ENCODE measurements at regions of chr20 and their contacts with region 1.

Region 1: GRCh38 chr20:2101865-2102584 is 398 bp downstream of the STK35 start:
- DNase-seq: peak; percentile 96
- H3K4me3 Mint-ChIP-seq: peak overlapping the region; percentile 97
- H3K27ac Mint-ChIP-seq: peak overlapping the region; percentile 99
- H3K4me1 Mint-ChIP-seq: peaks cover 39% of the 10 kb centered on the region
- H3K27me3 Mint-ChIP-seq: peaks cover 11% of the 10 kb centered on the region

Region 2: GRCh38 chr20:543369-544152 is 1558.5 kb before region 1 on chr20 and contains the start of gene CSNK2A1:
- intact Hi-C with region 1: loop called (anchors 5 kb)
- DNase-seq: peak; percentile 99
- H3K4me3 Mint-ChIP-seq: peak within 1 kb of the TSS; percentile 88
- H3K27ac Mint-ChIP-seq: peak within 1 kb of the TSS; percentile 97
- H3K4me1 Mint-ChIP-seq: peaks cover 38% of the 10 kb centered on the region
- H3K27me3 Mint-ChIP-seq: peaks cover 9% of the 10 kb centered on the region
- total RNA-seq, gene CSNK2A1: 179 TPM in 2 replicates

Region 3: GRCh38 chr20:833450-834150 is 1268.4 kb before region 1 on chr20 and contains the start of gene FAM110A:
- intact Hi-C with region 1: loop called (anchors 5 kb)
- DNase-seq: peak; percentile 99
- H3K4me3 Mint-ChIP-seq: peak within 1 kb of the TSS; percentile 84
- H3K27ac Mint-ChIP-seq: peak within 1 kb of the TSS; percentile 85
- H3K4me1 Mint-ChIP-seq: peaks cover 43% of the 10 kb centered on the region
- H3K27me3 Mint-ChIP-seq: no peaks in the 10 kb centered on the region
- total RNA-seq, gene FAM110A: 13.3 and 15.4 TPM in 2 replicates

Region 4: DNA sequence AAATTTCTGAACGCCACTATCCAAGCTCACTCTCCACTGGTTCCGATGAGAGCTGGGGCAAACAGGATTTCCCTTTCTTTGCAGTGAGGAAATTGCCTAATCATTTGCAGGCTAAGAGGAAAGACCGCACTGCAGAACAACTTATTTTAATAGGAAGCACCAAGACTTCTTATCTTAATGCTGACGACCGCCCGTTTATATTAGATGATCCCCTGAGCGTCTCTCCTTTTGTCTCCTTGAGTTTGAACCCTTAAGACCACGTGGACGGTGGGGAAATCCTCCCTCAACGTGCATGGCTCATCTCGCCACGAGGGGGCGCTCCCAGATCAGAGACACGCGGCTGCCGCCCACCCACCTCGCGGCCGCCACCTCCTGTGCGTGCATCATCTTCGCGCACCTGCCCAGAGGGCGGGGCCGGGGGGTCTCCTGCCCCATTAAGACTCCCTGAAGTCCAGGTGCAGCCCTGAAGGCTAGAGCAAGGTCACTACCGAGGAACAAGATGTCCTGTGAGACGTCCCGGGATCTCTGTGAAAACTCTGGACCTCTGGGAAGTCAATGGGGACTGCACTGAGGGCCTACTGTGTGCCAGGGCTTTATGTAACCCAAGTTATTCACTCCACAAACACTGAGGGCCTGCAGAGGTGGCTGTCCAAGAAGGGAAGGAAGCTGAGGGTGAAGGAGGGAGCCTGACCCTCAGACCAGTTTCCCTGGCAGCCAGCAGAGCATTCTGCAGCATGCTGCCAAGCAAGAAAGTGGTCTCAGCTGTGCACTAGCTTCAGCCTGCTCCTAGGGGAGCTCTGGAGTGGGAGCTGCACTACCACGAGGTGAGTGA is 136.3 kb before region 1 on chr20:
- intact Hi-C with region 1: loop called (anchors 2 kb)
- DNase-seq: peak; percentile 91
- H3K4me3 Mint-ChIP-seq: peak overlapping the region; percentile 63
- H3K27ac Mint-ChIP-seq: no peak overlapping the region
- H3K4me1 Mint-ChIP-seq: peaks cover 9% of the 10 kb centered on the region
- H3K27me3 Mint-ChIP-seq: peaks cover 20% of the 10 kb centered on the region

Region 5: GRCh38 chr20:2118783-2119182 is 16.8 kb after region 1 on chr20:
- intact Hi-C with region 1: loop called (anchors 2 kb)
- DNase-seq: no peak
- H3K4me3 Mint-ChIP-seq: peak overlapping the region; percentile 46
- H3K27ac Mint-ChIP-seq: peak overlapping the region; percentile 89
- H3K4me1 Mint-ChIP-seq: peaks cover 41% of the 10 kb centered on the region
- H3K27me3 Mint-ChIP-seq: no peaks in the 10 kb centered on the region

Region 6: DNA sequence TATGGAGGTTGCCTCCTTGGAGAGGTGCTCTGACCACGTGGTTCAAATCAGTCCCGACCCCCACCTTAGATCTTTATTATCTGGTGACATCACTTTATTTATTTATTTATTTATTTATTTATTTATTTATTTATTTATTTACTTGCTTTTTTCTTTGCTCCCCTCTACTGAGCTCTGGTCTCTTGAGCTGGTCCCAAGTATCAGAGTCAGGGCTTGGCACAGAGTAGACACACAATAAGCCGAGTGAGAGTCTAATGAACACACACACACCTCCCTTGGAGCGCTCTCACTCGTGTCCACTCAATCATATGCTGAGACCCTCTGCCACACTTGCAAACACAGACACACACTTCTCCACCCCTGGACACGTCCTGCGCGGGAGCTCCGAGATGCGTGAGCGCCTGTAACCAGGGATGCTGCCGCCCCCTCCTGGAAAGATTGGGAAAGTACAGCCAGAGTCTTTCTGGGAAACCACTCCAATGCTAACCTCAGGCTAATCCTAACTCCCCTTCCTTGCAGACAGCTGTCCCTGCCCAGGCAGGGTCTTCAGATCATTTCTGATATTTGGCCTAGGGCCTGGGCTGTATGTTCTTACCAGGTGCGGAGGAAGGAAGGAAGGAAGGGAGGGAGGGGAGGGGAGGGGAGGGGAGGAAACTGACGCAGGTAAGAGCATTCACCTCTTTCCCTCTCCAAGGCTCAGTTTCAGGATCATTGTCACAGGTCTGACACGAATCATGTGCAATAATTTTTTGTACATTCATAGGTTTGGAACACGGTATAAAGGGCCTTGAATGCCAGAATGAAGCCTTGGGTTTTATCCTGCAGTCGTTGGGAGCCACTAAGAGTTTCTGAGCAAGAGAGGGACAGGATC is 70.5 kb after region 1 on chr20:
- intact Hi-C with region 1: loop called (anchors 5 kb)
- DNase-seq: peak; percentile 90
- H3K4me3 Mint-ChIP-seq: no peak overlapping the region
- H3K27ac Mint-ChIP-seq: no peak overlapping the region
- H3K4me1 Mint-ChIP-seq: peaks cover 3% of the 10 kb centered on the region
- H3K27me3 Mint-ChIP-seq: peaks cover 17% of the 10 kb centered on the region

Region 7: DNA sequence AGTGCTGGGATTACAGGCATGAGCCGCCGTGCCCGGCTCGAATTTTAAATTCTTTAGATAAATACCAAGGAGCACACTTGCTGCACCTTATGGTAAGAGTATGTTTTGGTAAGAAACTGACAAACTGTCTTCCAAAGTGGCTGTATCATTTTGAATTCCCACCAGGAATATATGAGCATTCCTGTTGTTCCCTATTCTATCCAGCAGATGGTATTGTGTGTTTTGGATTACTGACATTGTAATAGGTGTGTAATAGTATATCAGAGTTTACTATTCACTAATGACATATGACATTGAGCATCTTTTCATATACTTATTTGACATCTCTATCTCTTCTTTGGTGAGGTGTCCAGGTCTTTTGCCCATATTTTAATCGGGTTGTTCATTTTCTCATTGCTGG is 319.2 kb after region 1 on chr20:
- intact Hi-C with region 1: no loop called
- DNase-seq: no peak
- H3K4me3 Mint-ChIP-seq: no peak overlapping the region
- H3K27ac Mint-ChIP-seq: no peak overlapping the region
- H3K4me1 Mint-ChIP-seq: no peaks in the 10 kb centered on the region
- H3K27me3 Mint-ChIP-seq: peaks cover 17% of the 10 kb centered on the region

Measured in activated CD4-positive, alpha-beta T cell treated with anti-CD3 and anti-CD28 coated beads, Interleukin-2, amount 10 ng/mL, durations not matched to agents 24 days and 14 days (primary cell).